Lower leg skin (tissue), 4 donors: ENCODE measurements at regions of chr2 and their contacts with region 1.

Region 1: DNA sequence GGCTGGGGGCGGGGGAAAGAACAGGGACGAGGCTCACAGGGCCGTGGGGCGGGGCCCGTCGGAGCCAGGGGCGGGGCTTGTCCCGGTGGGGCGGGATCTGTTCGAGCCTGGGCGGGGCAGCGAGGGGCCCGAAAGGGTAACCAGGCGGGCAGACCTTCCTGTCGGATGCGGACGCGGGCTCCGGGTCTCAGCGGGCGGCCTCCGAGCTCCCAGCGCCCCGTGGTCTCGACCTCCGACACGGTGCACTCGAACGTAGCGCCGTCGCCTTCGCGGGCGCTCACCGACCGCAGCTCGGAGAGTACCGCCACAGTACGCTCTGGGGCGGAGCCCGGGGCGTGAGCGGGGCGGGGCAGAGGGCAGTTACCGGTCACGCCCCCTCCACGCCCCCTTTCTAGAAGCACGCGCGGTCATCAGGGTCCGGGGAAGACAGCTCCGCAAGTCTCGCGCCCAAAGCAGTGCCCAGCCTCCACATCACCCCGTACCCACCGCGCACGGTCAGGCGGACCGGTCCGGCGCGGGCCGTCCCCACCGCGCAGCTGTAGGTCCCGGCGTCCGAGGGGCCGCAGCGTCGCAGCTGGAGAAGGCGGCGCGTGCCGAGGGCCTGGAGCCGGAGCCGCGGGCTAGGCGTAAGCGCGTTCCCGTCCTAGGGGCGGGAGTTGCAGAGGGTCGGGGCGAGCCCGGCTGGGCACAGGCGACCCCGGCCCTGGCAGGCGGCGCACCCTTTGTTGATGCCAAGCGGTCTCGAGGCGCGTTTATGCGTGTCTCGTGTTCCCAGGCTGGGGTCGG is 8.7 kb downstream of the TMEM198 start:
- DNase-seq: peak; percentile 75 to 97
- H3K4me3 ChIP-seq: peak overlapping the region; percentile 32
- CTCF ChIP-seq: no peak
- POLR2A ChIP-seq: no peak

Region 2: DNA sequence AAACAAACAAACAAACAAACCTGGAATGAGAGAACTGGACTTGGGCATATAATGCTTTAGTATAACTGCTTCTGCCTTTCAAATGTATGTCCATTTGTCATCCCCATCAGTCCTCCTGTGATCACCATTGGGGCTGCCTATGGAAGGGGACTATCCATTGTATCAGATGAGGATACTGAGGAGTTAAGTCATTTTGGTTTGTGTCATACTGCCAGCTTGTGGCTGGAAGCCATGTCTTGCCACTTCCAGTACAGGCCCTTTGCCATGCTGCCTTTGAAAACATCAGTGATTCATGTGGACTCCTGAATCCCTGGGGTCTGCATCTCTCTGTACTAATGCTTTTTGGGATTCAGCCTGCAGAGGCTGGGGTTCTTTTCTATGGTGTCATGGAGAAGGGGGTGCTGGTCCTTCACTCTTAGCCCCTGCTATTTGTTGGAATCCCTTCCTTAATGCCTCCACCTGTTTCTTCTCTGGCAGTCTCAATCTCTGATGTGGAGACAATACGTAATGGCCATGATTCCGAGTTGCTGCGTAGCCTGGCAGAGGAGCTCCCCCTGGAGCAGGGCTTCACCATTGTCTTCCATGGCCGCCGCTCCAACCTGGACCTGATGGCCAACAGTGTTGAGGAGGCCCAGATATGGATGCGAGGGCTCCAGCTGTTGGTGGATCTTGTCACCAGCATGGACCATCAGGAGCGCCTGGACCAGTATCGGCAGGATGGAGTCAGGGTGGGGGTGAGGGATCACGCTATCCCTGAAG is 934.3 kb before region 1 on chr2:
- intact Hi-C with region 1: no loop called
- DNase-seq: no peak
- H3K4me3 ChIP-seq: no peak overlapping the region
- CTCF ChIP-seq: no peak
- POLR2A ChIP-seq: no peak

Region 3: DNA sequence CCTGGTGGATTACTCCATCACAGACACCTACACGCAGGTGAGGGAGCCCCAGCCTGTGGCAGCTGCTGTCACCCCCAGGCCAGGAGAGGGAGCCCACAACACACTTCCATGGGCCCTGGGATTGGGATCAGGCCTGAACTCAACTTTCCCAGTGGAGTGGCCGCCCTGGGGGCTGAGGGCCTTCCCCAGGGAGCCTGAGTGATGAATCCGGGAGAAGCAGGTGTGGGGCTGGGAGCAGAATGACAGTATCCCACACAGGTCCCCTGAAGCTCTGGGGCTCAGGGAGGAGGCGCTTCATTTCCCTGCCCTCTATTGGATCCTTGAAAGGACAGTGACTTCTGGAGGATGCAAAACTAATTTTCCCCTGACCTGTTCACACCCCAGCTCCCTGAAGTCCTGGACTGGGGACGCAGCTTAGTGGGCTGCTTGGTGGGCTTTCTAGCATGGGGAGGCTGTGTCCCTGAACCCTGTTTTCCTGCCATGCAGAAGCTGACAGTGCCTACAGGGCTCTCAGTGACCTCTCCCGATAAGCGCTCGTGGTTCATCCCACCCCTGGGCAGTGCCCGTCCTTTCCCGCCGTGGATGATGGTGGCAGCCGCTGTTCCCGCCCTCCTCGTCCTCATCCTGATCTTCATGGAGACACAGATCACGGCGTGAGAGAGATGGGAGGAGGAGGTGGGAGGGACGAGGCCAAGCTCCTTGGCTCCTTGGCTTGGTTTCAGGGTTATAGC is 85.8 kb after region 1 on chr2:
- intact Hi-C with region 1: loop called (anchors 10 kb)
- DNase-seq: peak in 1 of 2 donors; percentile 78
- H3K4me3 ChIP-seq: no peak overlapping the region
- CTCF ChIP-seq: no peak
- POLR2A ChIP-seq: no peak